Adrenal gland (tissue), 19 donors: ENCODE measurements at regions of chr6 and their contacts with region 1.

Region 1: GRCh38 chr6:68634726-68635411 is at the start of gene ADGRB3:
- DNase-seq: peak; percentile 49 to 86 (median 62)
- H3K4me3 ChIP-seq: peak within 1 kb of the TSS in 2 of 4 donors; percentile 41 to 74
- H3K27ac ChIP-seq: peak within 1 kb of the TSS in 3 of 5 donors; percentile 33 to 86 (median 83)
- H3K4me1 ChIP-seq: peaks cover 4 to 7% of the 10 kb centered on the region in 2 donors
- H3K27me3 ChIP-seq: no peaks in the 10 kb centered on the region
- CTCF ChIP-seq: peak in 2 of 6 experiments; percentile 16 to 30
- POLR2A ChIP-seq: peak in 1 of 2 donors; percentile 43
- total RNA-seq, gene ADGRB3: 1.3 to 9.0 (median 2.3) TPM

Region 2: GRCh38 chr6:68400396-68400795 is 234.5 kb before region 1 on chr6:
- intact Hi-C with region 1: no loop called
- DNase-seq: no peak
- H3K4me3 ChIP-seq: no peak overlapping the region
- H3K27ac ChIP-seq: no peak overlapping the region
- H3K4me1 ChIP-seq: no peaks in the 10 kb centered on the region
- H3K27me3 ChIP-seq: no peaks in the 10 kb centered on the region
- CTCF ChIP-seq: no peak
- POLR2A ChIP-seq: no peak

Region 3: DNA sequence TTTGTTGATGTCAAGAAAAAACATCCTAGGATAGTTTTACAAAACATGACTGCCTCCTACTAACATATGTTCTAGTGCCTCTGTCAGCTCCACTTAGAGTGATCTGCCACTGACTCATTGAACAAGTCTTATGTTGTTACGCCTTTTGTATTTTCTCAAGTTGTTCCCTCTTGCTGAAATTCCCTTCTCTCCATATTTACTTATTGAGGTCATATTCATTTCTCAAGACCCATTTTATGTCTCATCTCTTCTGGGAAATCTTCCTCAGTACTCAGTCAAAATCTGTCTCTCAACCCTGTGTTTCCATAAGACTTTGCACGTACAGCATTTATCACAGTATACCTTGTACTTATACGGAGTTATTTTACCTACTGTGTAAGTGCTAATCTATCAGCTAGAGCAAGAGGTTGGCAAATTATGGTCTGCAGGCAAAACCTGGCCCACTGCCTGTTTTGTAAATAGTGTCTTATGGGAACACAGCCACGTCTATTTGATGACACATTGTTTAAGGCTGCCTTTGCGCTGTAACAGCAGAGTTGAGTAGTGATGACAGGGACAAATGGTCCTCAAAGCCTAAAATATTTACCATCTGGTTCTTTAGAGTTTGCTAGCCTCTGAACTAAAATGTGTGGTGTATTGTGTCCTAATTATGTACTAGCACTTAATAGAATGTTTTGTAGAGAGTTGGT is 83.7 kb after region 1 on chr6:
- intact Hi-C with region 1: no loop called
- DNase-seq: no peak
- H3K4me3 ChIP-seq: no peak overlapping the region
- H3K27ac ChIP-seq: no peak overlapping the region
- H3K4me1 ChIP-seq: no peaks in the 10 kb centered on the region
- H3K27me3 ChIP-seq: no peaks in the 10 kb centered on the region
- CTCF ChIP-seq: no peak
- POLR2A ChIP-seq: no peak

Region 4: GRCh38 chr6:68778356-68779020 is 143.6 kb after region 1 on chr6:
- intact Hi-C with region 1: loop called in 1 of 2 experiments (anchors 5 kb)
- DNase-seq: peak in 6 of 7 donors; percentile 22 to 64 (median 33)
- H3K4me3 ChIP-seq: no peak overlapping the region
- H3K27ac ChIP-seq: no peak overlapping the region
- H3K4me1 ChIP-seq: peaks cover 0 to 7% of the 10 kb centered on the region in 2 donors
- H3K27me3 ChIP-seq: no peaks in the 10 kb centered on the region
- CTCF ChIP-seq: peak; percentile 50 to 83 (median 68)
- POLR2A ChIP-seq: no peak

Region 5: DNA sequence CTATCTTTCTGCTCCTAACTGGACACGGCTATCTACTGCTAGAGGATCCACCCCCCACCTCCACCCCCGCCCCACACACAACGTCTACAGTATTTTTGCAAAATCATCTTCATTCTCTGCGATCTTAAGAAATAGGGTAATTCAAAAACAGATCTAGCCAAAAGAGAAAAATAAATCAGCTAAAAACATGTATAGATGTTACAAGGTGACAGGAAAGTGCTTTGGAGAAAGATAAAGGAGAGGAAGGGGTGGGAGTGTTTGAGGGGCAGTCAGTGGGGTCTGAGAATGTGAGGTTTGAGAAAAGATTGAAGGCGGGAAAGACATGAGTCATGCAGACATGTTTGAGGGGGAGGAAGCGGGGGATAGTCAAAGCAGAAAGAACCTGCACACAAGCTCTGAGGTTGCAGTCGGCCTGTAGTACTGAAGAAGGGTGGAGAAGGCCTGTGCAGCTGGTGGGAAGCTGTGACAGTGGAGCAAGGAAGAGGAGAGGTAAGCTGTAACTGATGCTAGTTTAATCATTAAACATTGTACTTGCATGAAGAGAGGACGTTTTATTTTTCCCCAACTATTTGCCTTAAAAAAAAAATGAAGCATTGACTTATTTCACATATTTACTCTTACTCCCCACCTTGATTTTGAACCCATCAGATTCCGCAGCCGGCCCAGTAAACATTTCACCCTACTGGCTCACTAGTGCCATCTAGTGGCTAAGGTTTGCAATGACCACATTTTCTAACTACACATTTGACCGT is 332.9 kb after region 1 on chr6:
- intact Hi-C with region 1: loop called in 1 of 2 experiments (anchors 2 kb)
- DNase-seq: peak; percentile 49 to 81 (median 64)
- H3K4me3 ChIP-seq: no peak overlapping the region
- H3K27ac ChIP-seq: no peak overlapping the region
- H3K4me1 ChIP-seq: no peaks in the 10 kb centered on the region
- H3K27me3 ChIP-seq: no peaks in the 10 kb centered on the region
- CTCF ChIP-seq: peak; percentile 71 to 95 (median 81)
- POLR2A ChIP-seq: no peak

Region 6: GRCh38 chr6:69116658-69117057 is 481.8 kb after region 1 on chr6:
- intact Hi-C with region 1: no loop called
- DNase-seq: no peak
- H3K4me3 ChIP-seq: no peak overlapping the region
- H3K27ac ChIP-seq: no peak overlapping the region
- H3K4me1 ChIP-seq: no peaks in the 10 kb centered on the region
- H3K27me3 ChIP-seq: no peaks in the 10 kb centered on the region
- CTCF ChIP-seq: no peak
- POLR2A ChIP-seq: no peak